Activated CD8-positive, alpha-beta T cell treated with anti-CD3 and anti-CD28 coated beads, Interleukin-2, amount 10 ng/mL, durations not matched to agents 7 days and 5 days (primary cell): ENCODE measurements at regions of chr7 and their contacts with region 1.

Region 1: GRCh38 chr7:150368096-150368883 is at the start of gene REPIN1:
- DNase-seq: peak; percentile 83
- ATAC-seq: peak; percentile 73
- H3K4me3 Mint-ChIP-seq: peak within 1 kb of the TSS; percentile 96
- H3K27ac Mint-ChIP-seq: peak within 1 kb of the TSS; percentile 91
- H3K4me1 Mint-ChIP-seq: peaks cover 46% of the 10 kb centered on the region
- H3K27me3 Mint-ChIP-seq: no peaks in the 10 kb centered on the region
- total RNA-seq, gene REPIN1: 40.9 to 43.1 TPM

Region 2: DNA sequence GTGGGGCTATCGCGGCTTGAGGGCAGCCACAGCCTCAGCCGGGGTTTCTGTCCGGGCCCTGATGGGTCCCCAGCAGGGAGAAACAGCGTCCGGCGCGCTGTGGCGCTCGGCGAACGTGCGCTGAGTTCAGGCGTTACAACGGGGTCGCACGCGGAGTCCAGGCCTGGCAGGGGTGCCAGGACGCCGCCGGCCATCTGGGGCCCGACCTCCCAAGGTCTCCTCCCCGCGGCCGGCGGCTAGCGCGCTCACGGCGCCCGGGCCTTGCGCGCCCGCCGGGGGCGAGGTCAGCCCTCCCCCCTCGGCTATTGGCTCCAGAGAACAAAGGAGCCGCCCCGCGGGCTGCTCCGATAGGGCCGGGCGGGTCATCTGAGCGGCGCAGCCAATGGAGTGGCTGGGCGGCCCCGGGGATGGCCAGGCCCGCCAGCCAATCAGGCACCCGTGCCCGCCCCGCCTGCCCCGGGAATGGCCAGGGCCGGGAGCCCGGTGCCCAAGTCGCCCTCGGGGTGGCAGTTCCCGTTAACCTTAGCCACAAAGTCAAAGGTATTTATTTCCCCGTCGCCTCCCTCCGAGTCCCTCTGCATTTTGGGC is 10.7 kb after region 1 on chr7 and contains the start of gene ZNF775:
- CTCF ChIA-PET with region 1: interaction called, 12 read pairs
- POLR2A ChIA-PET with region 1: interaction called, 13 read pairs
- DNase-seq: peak; percentile 94
- ATAC-seq: peak; percentile 99
- H3K4me3 Mint-ChIP-seq: peak within 1 kb of the TSS; percentile 86
- H3K27ac Mint-ChIP-seq: peak within 1 kb of the TSS; percentile 72
- H3K4me1 Mint-ChIP-seq: peaks cover 40% of the 10 kb centered on the region
- H3K27me3 Mint-ChIP-seq: no peaks in the 10 kb centered on the region
- total RNA-seq, gene ZNF775: 6.7 to 7.7 TPM

Region 3: DNA sequence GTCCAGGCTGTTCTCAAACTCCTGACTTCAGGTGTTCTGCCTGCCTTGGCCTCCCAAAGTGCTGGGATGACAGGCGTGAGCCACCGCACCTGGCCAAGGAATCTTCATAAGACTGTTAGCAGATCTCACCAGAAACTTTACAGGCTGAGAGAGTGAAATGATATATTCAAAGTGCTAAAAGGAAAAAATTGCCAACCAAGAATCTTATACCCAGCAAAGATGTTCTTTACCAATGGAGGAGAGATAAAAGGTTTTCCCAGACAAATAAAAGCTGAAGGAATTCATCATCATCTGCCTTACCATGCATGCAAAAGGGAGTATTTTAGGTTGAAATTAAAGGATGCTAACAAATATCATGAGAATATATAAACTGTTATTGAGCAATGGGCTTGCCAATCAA is 170.0 kb after region 1 on chr7:
- CTCF ChIA-PET with region 1: no interaction called
- POLR2A ChIA-PET with region 1: no interaction called
- DNase-seq: no peak
- ATAC-seq: no peak
- H3K4me3 Mint-ChIP-seq: no peak overlapping the region
- H3K27ac Mint-ChIP-seq: no peak overlapping the region
- H3K4me1 Mint-ChIP-seq: peaks cover 9% of the 10 kb centered on the region
- H3K27me3 Mint-ChIP-seq: no peaks in the 10 kb centered on the region